ENCODE measurements at regions of chr1 and their contacts with region 1.

Region 1: GRCh38 chr1:15028102-15028501 is 125.4 kb upstream of the TMEM51 start:
- DNase-seq: peak; percentile 47
- H3K4me3 ChIP-seq: no peak overlapping the region
- CTCF ChIP-seq: no peak

Region 2: GRCh38 chr1:14681182-14681581 is 346.9 kb before region 1 on chr1:
- CTCF ChIA-PET with region 1: no interaction called
- POLR2A ChIA-PET with region 1: no interaction called
- DNase-seq: no peak
- H3K4me3 ChIP-seq: no peak overlapping the region
- CTCF ChIP-seq: no peak

Region 3: GRCh38 chr1:14778898-14779865 is 248.9 kb before region 1 on chr1:
- CTCF ChIA-PET with region 1: interaction called, 24 read pairs
- POLR2A ChIA-PET with region 1: no interaction called
- DNase-seq: no peak
- H3K4me3 ChIP-seq: no peak overlapping the region
- CTCF ChIP-seq: peak; percentile 65

Region 4: GRCh38 chr1:14923727-14924452 is 104.2 kb before region 1 on chr1:
- CTCF ChIA-PET with region 1: interaction called, 32 read pairs
- POLR2A ChIA-PET with region 1: no interaction called
- DNase-seq: no peak
- H3K4me3 ChIP-seq: peak overlapping the region; percentile 70
- CTCF ChIP-seq: no peak

Region 5: DNA sequence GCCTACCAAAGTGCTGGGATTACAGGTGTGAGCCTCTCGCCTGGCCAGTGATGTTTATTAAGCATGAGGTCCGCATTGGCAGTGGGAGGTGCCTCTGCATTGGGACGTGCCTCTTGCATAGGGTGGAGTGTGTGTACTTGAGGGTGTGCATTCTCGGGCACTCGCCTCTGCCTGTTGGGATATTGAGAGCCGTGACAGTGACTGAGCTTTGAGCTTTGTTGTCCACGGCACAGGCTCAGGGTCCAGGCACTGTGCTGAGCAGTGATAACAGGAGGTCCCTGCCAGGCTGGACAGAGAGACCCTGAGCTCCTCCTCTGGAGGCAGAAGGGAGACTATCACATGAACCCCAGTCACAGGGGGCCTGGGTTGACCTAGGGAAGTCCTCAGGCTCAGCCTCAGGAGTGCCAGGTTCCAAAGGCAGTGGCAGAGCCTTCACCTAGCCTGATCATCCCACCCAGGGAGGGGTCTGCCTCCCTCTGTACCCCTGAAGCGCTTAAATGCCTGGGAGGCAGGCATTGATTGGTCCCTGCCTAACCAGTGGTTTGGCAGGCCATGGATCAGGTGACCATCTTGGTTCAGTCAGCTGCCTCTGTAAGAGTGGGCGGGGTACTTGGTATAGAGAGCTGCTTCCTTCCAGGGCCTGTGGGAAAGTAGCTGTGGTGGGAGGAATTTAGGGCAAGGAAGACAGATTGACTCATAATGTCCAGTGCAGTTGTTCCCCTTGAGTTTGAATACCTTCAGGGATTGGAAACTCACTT is 88.4 kb before region 1 on chr1:
- CTCF ChIA-PET with region 1: interaction called, 19 read pairs
- POLR2A ChIA-PET with region 1: interaction called, 3 read pairs
- DNase-seq: peak; percentile 52
- H3K4me3 ChIP-seq: no peak overlapping the region
- CTCF ChIP-seq: no peak

Region 6: GRCh38 chr1:14961661-14962267 is 66.3 kb before region 1 on chr1:
- CTCF ChIA-PET with region 1: interaction called, 12 read pairs
- POLR2A ChIA-PET with region 1: no interaction called
- DNase-seq: no peak
- H3K4me3 ChIP-seq: no peak overlapping the region
- CTCF ChIP-seq: no peak

Region 7: GRCh38 chr1:15008783-15009729 is 19.0 kb before region 1 on chr1:
- CTCF ChIA-PET with region 1: interaction called, 41 read pairs
- POLR2A ChIA-PET with region 1: no interaction called
- DNase-seq: no peak
- H3K4me3 ChIP-seq: no peak overlapping the region
- CTCF ChIP-seq: no peak

Region 8: GRCh38 chr1:15038232-15039016 is 10.3 kb after region 1 on chr1:
- CTCF ChIA-PET with region 1: interaction called, 25 read pairs
- POLR2A ChIA-PET with region 1: no interaction called
- DNase-seq: no peak
- H3K4me3 ChIP-seq: no peak overlapping the region
- CTCF ChIP-seq: peak; percentile 23

Region 9: GRCh38 chr1:15296602-15297321 is 268.7 kb after region 1 on chr1:
- CTCF ChIA-PET with region 1: no interaction called
- POLR2A ChIA-PET with region 1: no interaction called
- DNase-seq: no peak
- H3K4me3 ChIP-seq: no peak overlapping the region
- CTCF ChIP-seq: no peak

Measured in AG04449 (cell line).